ENCODE measurements at regions of chr22 and their contacts with region 1.

Region 1: DNA sequence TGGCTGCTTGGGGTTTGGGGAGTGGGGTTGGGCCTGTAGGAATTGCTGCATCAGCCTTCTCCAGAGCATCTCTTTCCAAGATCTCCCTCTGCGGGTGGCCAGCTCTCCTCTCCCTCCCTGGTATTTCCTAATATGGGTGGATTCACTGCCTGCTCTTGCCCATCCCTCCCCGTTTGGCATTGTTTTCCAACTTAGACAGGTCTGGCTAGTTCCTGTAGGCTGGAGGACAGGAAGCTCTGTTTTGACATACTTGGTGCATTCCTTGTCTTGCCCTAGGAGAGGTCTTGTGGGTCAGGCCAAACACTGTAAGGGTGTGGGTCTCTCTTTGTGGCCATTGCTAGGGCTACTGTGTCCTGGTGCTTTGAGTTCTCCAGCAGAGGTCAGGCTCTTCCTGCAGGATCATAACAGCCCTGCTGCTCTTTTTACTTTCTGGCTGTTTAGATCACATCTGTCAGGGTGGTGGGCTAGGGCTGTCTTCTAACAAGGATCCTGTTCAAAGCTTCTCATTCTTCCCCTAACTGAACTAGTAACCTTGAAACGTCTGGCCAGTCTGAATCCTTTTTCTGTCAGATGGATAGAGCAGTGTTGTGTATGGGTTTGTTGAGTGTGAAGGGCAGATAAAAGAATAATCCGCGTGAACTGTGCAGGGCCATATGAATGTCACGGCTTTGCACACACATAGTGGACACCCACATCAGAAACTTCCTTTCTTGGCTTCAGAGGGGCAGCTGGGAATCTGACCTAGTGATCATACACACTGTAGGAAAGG is 18.3 kb upstream of the MICALL1 start:
- DNase-seq: no peak
- H3K4me3 ChIP-seq: no peak overlapping the region
- H3K4me1 ChIP-seq: no peaks in the 10 kb centered on the region
- H3K27me3 ChIP-seq: no peaks in the 10 kb centered on the region

Region 2: GRCh38 chr22:36506637-36507517 is 1380.9 kb before region 1 on chr22 and contains the start of gene FOXRED2:
- in situ Hi-C with region 1: loop called (anchors 25 kb)
- DNase-seq: peak; percentile 77 to 91
- H3K4me3 ChIP-seq: peak within 1 kb of the TSS; percentile 40
- H3K4me1 ChIP-seq: peaks cover 20% of the 10 kb centered on the region
- H3K27me3 ChIP-seq: no peaks in the 10 kb centered on the region

Region 3: GRCh38 chr22:37745548-37746365 is 142.0 kb before region 1 on chr22:
- in situ Hi-C with region 1: no loop called
- DNase-seq: peak; percentile 86 to 95
- H3K4me3 ChIP-seq: peak overlapping the region; percentile 88
- H3K4me1 ChIP-seq: peaks cover 5% of the 10 kb centered on the region
- H3K27me3 ChIP-seq: no peaks in the 10 kb centered on the region

Region 4: GRCh38 chr22:37985751-37986281 is 98.0 kb after region 1 on chr22:
- in situ Hi-C with region 1: no loop called
- DNase-seq: no peak
- H3K4me3 ChIP-seq: no peak overlapping the region
- H3K4me1 ChIP-seq: no peaks in the 10 kb centered on the region
- H3K27me3 ChIP-seq: no peaks in the 10 kb centered on the region

Region 5: DNA sequence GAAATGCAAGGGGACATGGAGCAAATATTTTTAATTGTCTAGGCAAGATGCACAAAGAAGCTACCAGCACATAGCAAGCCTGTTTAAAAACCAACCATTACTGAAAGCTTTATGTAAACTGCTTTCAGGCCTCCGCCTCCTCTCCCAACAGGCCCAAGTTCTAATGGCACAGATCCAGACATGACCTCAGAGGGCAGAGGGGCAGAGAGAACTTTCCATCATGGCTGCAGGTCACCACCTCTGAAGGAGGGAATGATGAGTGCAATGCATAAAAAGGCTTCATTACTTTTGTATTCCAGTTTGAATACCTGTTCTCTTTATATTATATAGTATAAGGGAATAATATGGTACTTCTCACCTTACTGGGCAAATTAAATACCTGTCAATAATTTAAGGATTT is 603.1 kb after region 1 on chr22:
- in situ Hi-C with region 1: loop called (anchors 25 kb)
- DNase-seq: no peak
- H3K4me3 ChIP-seq: no peak overlapping the region
- H3K4me1 ChIP-seq: no peaks in the 10 kb centered on the region
- H3K27me3 ChIP-seq: no peaks in the 10 kb centered on the region

Measured in HAP-1 (cell line).